MCF 10A (cell line): ENCODE measurements at regions of chr12 and their contacts with region 1.

Region 1: DNA sequence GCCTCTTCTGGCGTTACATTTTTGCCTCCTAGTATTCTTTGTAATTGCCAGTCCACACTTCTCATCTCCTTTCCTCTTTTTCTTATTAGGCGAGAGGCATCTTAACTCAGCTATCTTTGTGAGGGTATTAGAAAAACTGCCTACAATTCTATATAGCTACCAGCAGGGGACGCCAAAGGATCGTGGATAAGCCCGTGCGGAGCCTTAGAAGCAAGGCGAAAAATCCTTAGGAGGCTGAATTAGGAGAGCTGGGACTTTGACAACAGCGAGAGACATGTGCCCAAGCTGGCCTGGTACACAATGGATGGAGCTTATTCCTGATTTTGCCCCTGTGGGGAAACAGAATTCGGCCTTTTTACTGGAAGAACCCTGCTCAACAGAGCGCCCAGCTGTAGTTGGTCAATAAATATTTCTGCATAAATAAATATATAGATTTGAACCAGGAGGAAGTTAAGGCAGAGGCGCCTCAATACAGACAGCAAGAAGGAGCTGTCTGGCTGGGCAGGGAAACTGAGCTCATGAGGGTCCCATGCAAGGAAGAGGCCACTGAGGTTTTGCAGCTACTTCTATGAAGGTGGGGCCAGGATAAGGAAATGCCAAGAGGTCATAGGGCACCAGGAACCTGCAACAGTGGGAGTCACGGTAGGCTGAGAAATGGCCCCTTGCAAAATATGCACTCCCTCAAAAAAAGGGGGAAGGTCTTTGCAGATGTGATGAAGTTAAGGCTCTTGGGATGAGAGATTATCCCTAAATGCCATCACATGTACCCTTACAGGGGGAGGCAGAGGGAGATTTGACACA is 14.6 kb upstream of the RBM19 start:
- DNase-seq: peak; percentile 79
- H3K4me3 Mint-ChIP-seq: no peak overlapping the region
- H3K27ac Mint-ChIP-seq: no peak overlapping the region
- H3K4me1 Mint-ChIP-seq: no peaks in the 10 kb centered on the region
- H3K27me3 Mint-ChIP-seq: peaks cover 40% of the 10 kb centered on the region
- CTCF ChIP-seq: peak; percentile 95

Region 2: GRCh38 chr12:114013575-114014345 is 33.0 kb after region 1 on chr12:
- CTCF ChIA-PET with region 1: interaction called, 10 read pairs
- POLR2A ChIA-PET with region 1: no interaction called
- intact Hi-C with region 1: no loop called
- DNase-seq: peak; percentile 45
- H3K4me3 Mint-ChIP-seq: no peak overlapping the region
- H3K27ac Mint-ChIP-seq: no peak overlapping the region
- H3K4me1 Mint-ChIP-seq: peaks cover 8% of the 10 kb centered on the region
- H3K27me3 Mint-ChIP-seq: peaks cover 35% of the 10 kb centered on the region
- CTCF ChIP-seq: peak; percentile 31

Region 3: GRCh38 chr12:114395755-114396152 is 415.0 kb after region 1 on chr12:
- CTCF ChIA-PET with region 1: no interaction called
- POLR2A ChIA-PET with region 1: no interaction called
- intact Hi-C with region 1: no loop called
- DNase-seq: no peak
- H3K4me3 Mint-ChIP-seq: no peak overlapping the region
- H3K27ac Mint-ChIP-seq: no peak overlapping the region
- H3K4me1 Mint-ChIP-seq: no peaks in the 10 kb centered on the region
- H3K27me3 Mint-ChIP-seq: peaks cover 70% of the 10 kb centered on the region
- CTCF ChIP-seq: no peak

Region 4: DNA sequence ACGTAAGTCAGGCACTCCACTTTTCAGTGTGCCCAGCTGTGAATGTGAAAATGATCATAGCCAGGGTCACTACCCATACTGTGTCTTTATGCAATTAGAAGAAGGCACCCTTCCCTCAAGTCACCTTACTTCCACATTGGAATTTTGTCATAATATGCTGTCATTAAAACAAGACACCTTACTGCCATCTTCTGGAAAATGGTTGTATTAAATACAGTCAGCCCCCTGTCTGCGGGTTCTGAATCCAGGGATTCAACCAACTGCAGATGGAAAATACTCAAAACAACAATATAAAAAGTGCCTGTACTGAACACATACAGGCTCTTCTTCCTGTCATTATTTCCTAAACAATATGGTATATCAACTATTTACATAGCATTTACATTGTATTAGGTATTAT is 495.4 kb after region 1 on chr12:
- CTCF ChIA-PET with region 1: interaction called, 25 read pairs
- POLR2A ChIA-PET with region 1: no interaction called
- intact Hi-C with region 1: loop called (anchors 1 kb)
- DNase-seq: peak; percentile 36
- H3K4me3 Mint-ChIP-seq: no peak overlapping the region
- H3K27ac Mint-ChIP-seq: no peak overlapping the region
- H3K4me1 Mint-ChIP-seq: peaks cover 2% of the 10 kb centered on the region
- H3K27me3 Mint-ChIP-seq: peaks cover 58% of the 10 kb centered on the region
- CTCF ChIP-seq: peak; percentile 46

Region 5: GRCh38 chr12:114499338-114499737 is 518.6 kb after region 1 on chr12:
- CTCF ChIA-PET with region 1: interaction called, 13 read pairs
- POLR2A ChIA-PET with region 1: no interaction called
- intact Hi-C with region 1: no loop called
- DNase-seq: no peak
- H3K4me3 Mint-ChIP-seq: no peak overlapping the region
- H3K27ac Mint-ChIP-seq: no peak overlapping the region
- H3K4me1 Mint-ChIP-seq: no peaks in the 10 kb centered on the region
- H3K27me3 Mint-ChIP-seq: peaks cover 74% of the 10 kb centered on the region
- CTCF ChIP-seq: no peak

Region 6: GRCh38 chr12:114636723-114637483 is 656.2 kb after region 1 on chr12:
- CTCF ChIA-PET with region 1: interaction called, 21 read pairs
- POLR2A ChIA-PET with region 1: no interaction called
- intact Hi-C with region 1: loop called (anchors 1 kb)
- DNase-seq: peak; percentile 24
- H3K4me3 Mint-ChIP-seq: no peak overlapping the region
- H3K27ac Mint-ChIP-seq: no peak overlapping the region
- H3K4me1 Mint-ChIP-seq: no peaks in the 10 kb centered on the region
- H3K27me3 Mint-ChIP-seq: peaks cover 27% of the 10 kb centered on the region
- CTCF ChIP-seq: peak; percentile 34